Activated T-helper 1 cell treated with anti-CD3 and anti-CD28 coated beads, Interleukin-12 subunit alpha, Interleukin-12 subunit beta, Interleukin-2, Interleukin-4 antibody, amounts not matched to agents 30 ng/mL and 10 ng/mL and 1 ng/mL, durations not matched to agents 14 hours and 24 hours and 36 hours (primary cell): ENCODE measurements at regions of chr11 and their contacts with region 1.

Region 1: GRCh38 chr11:129447654-129448239 is 72.1 kb downstream of the BARX2 start:
- DNase-seq: no peak
- H3K4me3 Mint-ChIP-seq: no peak overlapping the region
- H3K27ac Mint-ChIP-seq: peak overlapping the region; percentile 66
- H3K4me1 Mint-ChIP-seq: peaks cover 32% of the 10 kb centered on the region
- H3K27me3 Mint-ChIP-seq: peaks cover 2% of the 10 kb centered on the region

Region 2: DNA sequence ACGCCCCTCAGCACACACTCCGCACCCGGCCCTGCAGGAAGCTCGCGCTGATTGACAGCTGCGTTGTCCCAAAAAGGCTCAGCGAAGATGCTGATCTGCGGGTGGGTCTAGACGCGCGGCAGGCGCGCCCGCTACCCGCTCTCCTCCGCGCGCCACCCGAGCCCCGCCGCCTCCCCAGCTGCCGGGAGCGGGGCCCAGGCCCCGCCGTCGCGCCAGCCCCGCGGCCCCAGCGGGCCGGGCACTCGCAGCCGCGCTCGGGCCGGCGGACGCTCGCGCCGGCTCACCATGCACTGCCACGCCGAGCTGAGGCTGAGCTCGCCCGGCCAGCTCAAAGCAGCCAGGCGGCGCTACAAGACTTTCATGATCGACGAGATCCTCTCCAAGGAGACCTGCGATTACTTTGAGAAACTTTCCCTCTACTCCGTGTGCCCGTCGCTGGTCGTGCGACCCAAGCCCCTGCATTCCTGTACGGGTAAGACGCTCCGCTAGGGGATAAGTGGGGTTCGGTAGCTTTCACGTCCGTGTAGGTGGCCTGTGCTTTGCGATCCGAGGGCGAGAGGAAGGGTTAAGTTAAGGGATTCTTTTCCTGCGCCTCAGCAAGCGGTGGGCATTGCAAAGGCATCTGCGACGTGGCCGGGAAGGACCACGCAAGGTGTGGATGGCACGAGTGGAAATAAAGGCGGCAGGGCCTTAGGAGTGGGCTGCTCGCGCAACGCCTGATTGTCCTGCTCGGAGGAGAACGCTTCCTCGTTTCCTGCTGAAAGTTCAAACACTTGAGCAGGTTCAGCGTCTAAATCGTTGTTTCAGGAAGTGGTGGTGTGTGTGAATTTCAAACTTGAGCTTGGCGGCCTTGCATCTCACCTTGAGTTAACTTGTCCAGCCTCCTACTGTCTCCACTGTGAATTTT is 71.7 kb before region 1 on chr11 and contains the start of gene BARX2:
- intact Hi-C with region 1: loop called (anchors 5 kb)
- DNase-seq: peak; percentile 21
- H3K4me3 Mint-ChIP-seq: peak within 1 kb of the TSS; percentile 88
- H3K27ac Mint-ChIP-seq: peak within 1 kb of the TSS; percentile 77
- H3K4me1 Mint-ChIP-seq: peaks cover 38% of the 10 kb centered on the region
- H3K27me3 Mint-ChIP-seq: peaks cover 63% of the 10 kb centered on the region
- total RNA-seq, gene BARX2: 8.8 and 9.1 TPM in 2 replicates

Region 3: DNA sequence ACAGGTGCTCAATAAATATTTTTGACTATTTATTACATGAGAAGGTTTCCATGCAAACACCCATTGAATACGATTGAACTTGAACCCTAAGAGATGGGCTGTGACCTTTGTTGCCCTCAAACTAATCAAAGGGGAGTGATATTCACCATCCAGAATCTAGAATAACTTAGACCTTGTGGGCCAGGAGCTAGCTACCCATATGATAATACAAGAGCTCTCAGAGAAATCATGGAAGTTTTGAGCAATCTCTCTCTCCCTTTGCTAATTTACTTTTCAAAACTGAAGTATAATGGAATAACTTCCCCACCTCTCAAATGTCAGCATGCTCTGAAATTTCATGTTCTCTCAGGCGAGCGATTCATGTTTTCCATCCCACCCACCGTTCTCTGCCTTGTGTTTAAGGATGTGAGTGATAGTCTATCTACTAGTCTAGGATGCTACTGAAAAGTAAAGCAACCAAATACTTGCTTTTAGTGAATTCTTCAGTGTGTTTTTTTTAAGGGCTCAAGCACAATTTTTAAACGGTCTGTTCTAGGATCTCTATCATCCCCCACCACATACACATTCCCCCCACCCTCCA is 38.8 kb before region 1 on chr11:
- intact Hi-C with region 1: loop called (anchors 1 kb)
- DNase-seq: no peak
- H3K4me3 Mint-ChIP-seq: no peak overlapping the region
- H3K27ac Mint-ChIP-seq: peak overlapping the region; percentile 87
- H3K4me1 Mint-ChIP-seq: peaks cover 24% of the 10 kb centered on the region
- H3K27me3 Mint-ChIP-seq: peaks cover 3% of the 10 kb centered on the region

Region 4: GRCh38 chr11:129418039-129418438 is 29.7 kb before region 1 on chr11:
- intact Hi-C with region 1: loop called (anchors 1 kb)
- DNase-seq: no peak
- H3K4me3 Mint-ChIP-seq: peak overlapping the region; percentile 40
- H3K27ac Mint-ChIP-seq: peak overlapping the region; percentile 81
- H3K4me1 Mint-ChIP-seq: peaks cover 29% of the 10 kb centered on the region
- H3K27me3 Mint-ChIP-seq: no peaks in the 10 kb centered on the region

Region 5: GRCh38 chr11:129434641-129435498 is 12.9 kb before region 1 on chr11:
- intact Hi-C with region 1: loop called (anchors 1 kb)
- DNase-seq: no peak
- H3K4me3 Mint-ChIP-seq: no peak overlapping the region
- H3K27ac Mint-ChIP-seq: peak overlapping the region; percentile 2
- H3K4me1 Mint-ChIP-seq: peaks cover 34% of the 10 kb centered on the region
- H3K27me3 Mint-ChIP-seq: peaks cover 6% of the 10 kb centered on the region

Region 6: GRCh38 chr11:129574431-129574830 is 126.7 kb after region 1 on chr11:
- intact Hi-C with region 1: no loop called
- DNase-seq: no peak
- H3K4me3 Mint-ChIP-seq: no peak overlapping the region
- H3K27ac Mint-ChIP-seq: no peak overlapping the region
- H3K4me1 Mint-ChIP-seq: no peaks in the 10 kb centered on the region
- H3K27me3 Mint-ChIP-seq: no peaks in the 10 kb centered on the region